ENCODE measurements at regions of chr9 and their contacts with region 1.

Region 1: DNA sequence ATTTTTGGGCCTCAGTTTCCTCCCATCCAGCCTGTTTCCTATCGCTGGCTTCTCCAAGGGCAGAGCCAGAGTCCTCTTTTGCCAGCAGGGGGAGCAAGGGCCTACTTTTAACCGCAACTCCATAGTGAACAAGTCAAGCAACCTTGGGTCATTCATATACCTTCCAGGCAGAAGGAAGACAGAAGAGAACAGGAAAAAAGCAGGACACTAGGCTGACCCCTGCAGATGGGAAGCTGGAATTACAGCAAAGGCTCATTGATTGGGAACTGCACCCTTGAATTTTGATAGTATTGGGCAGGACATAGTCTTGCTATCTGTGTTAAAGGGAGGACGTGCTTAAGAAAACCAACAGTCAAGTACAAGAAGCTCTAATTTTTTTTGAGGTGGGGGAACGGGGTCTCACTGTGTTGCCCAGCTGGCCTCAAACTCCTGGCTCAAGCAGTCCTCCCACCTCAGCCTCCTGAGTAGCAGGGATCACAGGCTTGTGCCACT is 30.1 kb downstream of the QRFP start:
- DNase-seq: peak; percentile 74
- ATAC-seq: peak; percentile 67
- H3K4me3 Mint-ChIP-seq: no peak overlapping the region
- H3K27ac Mint-ChIP-seq: no peak overlapping the region
- H3K4me1 Mint-ChIP-seq: no peaks in the 10 kb centered on the region
- H3K27me3 Mint-ChIP-seq: no peaks in the 10 kb centered on the region
- CTCF ChIP-seq: peak; percentile 92

Region 2: DNA sequence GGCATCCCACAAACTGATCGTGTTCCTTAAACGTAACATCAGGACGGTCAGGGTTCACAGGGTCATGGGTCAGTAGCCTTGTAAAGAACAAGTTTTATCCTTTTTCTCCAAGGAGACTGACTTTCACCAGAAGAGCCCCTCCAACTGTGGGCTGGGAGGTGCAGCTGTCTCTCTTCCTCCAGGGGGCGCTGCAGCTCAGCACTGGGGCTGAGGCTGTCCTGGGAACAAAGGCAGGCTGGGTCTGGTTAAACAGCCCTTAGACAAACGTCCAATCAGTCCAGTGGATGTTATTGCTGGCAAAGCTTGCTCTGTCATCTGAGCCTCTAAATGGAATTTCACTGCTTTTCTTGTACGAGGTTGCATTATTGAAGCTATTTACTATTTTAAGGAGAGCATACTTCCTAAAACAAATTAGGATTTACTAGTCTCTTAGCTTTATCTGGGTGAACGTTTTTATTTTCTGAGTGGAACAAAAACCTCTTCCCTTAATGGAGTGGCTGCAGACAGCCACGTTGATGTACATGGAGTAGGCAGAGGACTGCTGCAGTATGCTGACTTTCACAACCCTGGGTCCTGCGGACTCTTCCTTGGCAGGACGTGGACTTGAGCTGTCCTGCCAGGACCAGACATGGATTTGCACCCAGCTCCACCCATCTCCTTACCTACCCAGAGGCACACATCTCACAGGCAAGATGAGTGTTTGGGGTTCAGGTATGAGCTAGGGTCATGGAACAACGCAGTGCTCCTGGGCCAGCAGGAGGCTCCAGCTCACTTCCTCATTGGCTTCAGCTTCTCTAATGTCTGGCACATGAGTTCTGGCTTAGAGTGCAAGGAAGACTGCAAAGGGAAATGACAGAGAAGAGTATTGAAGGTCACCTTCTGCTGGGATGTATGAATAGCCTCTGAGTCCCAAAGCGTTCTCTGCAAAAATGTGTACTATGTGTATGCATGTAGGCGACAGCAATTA is 165.2 kb before region 1 on chr9:
- CTCF ChIA-PET with region 1: interaction called, 74 read pairs
- POLR2A ChIA-PET with region 1: interaction called, 3 read pairs
- intact Hi-C with region 1: loop called (anchors 10 kb)
- DNase-seq: peak; percentile 83
- ATAC-seq: peak; percentile 94
- H3K4me3 Mint-ChIP-seq: no peak overlapping the region
- H3K27ac Mint-ChIP-seq: no peak overlapping the region
- H3K4me1 Mint-ChIP-seq: peaks cover 31% of the 10 kb centered on the region
- H3K27me3 Mint-ChIP-seq: no peaks in the 10 kb centered on the region
- CTCF ChIP-seq: peak; percentile 95

Region 3: DNA sequence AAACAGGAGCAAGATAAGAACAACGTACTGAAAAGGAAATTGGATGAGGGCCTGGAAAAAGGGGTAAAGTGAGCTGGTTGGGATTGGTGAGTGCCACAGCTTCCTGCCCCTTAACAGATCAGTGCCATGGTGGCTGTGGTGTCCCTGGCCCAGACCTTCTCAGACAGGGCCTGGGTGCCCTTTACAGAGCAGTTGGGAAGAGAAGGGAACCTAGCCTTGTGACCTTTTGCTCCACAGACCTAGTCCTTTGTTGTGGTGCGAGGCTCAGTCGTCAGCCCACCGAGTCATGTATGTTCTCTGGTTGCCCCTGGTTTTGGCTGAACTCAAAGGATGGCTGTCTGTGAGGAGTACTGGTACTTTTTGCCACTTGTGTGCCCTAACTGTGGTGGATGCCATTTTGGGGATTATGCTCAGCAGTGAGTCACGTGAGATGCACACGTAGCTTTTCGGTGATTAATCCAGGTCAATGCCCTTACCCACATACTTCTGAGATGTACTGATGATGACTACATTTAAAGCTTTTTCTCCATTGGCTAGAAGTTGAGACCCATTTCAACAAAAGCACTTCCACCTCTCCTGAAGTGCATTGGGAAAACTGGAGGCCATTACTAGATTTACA is 124.6 kb before region 1 on chr9:
- CTCF ChIA-PET with region 1: no interaction called
- POLR2A ChIA-PET with region 1: no interaction called
- intact Hi-C with region 1: no loop called
- DNase-seq: peak; percentile 57
- ATAC-seq: peak; percentile 90
- H3K4me3 Mint-ChIP-seq: no peak overlapping the region
- H3K27ac Mint-ChIP-seq: no peak overlapping the region
- H3K4me1 Mint-ChIP-seq: peaks cover 19% of the 10 kb centered on the region
- H3K27me3 Mint-ChIP-seq: no peaks in the 10 kb centered on the region
- CTCF ChIP-seq: no peak

Region 4: DNA sequence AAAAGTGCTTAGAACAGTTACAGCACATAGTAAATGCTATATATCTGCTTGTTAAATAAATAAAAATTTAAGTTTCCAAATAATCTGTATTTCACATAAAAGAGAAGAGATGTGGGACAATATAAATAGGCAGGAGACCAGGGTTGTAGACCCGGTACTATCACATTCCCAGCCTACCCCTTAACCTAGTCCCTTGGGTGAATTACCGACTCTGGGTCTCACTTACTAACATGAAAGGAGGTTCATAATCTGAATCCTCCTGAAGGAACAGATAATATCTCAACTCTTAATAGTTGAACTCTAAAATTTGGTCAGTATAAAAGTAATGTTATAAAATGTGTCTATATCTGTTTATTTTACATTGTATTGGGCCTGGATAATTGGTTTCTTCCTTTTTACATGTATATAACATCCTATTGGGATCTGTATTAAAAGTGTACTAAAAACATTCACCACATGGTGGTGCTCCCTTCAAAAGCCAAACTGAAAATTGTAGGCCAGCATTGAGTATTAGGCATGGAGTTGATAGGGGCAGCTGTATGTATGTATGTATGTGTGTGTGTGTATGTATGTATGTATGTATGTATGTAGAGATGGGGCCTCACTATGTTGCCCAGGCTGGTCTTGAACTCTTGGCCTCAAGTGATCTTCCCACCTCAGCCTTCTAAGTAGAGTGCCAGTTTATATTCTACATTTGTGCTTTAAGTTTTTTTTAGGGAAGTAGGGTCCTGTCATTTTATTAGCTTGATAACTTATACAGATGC is 95.7 kb before region 1 on chr9:
- CTCF ChIA-PET with region 1: interaction called, 26 read pairs
- POLR2A ChIA-PET with region 1: no interaction called
- intact Hi-C with region 1: loop called (anchors 5 kb)
- DNase-seq: peak; percentile 11
- ATAC-seq: peak; percentile 88
- H3K4me3 Mint-ChIP-seq: no peak overlapping the region
- H3K27ac Mint-ChIP-seq: no peak overlapping the region
- H3K4me1 Mint-ChIP-seq: peaks cover 36% of the 10 kb centered on the region
- H3K27me3 Mint-ChIP-seq: no peaks in the 10 kb centered on the region
- CTCF ChIP-seq: peak; percentile 76

Region 5: DNA sequence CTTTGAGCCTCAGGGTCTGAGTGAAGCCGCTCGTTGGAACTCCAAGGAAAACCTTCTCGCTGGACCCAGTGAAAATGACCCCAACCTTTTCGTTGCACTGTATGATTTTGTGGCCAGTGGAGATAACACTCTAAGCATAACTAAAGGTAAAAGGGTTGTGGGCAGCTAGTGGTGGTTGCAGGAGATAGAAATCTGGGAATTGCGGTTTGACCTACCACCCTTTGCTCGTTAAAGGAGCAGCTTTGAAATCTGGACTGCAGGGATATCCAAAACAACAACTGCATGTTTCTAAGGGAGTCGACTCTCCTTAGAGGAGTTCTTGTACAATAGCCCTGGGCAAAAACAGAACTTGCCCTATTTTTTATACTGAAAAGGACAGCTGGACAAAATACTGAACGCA is 12.4 kb before region 1 on chr9:
- CTCF ChIA-PET with region 1: interaction called, 10 read pairs
- POLR2A ChIA-PET with region 1: no interaction called
- intact Hi-C with region 1: no loop called
- DNase-seq: no peak
- ATAC-seq: no peak
- H3K4me3 Mint-ChIP-seq: no peak overlapping the region
- H3K27ac Mint-ChIP-seq: no peak overlapping the region
- H3K4me1 Mint-ChIP-seq: peaks cover 4% of the 10 kb centered on the region
- H3K27me3 Mint-ChIP-seq: no peaks in the 10 kb centered on the region
- CTCF ChIP-seq: no peak

Region 6: DNA sequence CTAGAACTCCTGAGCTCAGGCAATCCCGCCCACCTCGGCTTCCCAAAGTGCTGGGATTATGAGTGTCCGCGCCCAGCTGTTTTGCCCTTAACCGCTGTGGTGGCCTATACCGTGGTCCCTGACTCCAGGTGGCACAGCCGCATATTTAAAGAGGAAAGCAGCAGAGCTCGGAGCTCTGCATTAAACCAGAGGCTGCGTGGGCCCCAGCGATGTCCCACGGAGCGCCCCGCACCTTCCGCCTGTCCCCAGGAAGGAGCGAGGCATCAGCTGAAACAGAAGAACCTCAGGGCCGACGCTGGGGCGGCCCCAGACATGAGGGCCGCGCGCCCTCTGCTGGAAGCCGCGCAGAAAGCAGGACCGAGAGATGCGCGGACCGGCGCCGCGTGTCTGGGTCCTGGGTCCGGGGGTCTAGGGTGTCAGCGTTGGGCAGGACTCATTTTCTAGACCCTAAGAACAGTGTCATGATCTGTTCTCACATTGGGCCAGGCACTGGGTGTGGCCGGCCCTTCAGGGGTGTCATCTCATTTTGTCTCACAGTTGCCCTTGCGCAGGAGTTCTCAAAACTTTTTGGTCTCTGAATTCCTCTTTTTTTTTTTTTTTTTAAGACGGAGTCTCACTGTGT is 180.2 kb after region 1 on chr9:
- CTCF ChIA-PET with region 1: interaction called, 42 read pairs
- POLR2A ChIA-PET with region 1: no interaction called
- intact Hi-C with region 1: loop called (anchors 5 kb)
- DNase-seq: peak; percentile 80
- ATAC-seq: peak; percentile 94
- H3K4me3 Mint-ChIP-seq: no peak overlapping the region
- H3K27ac Mint-ChIP-seq: no peak overlapping the region
- H3K4me1 Mint-ChIP-seq: no peaks in the 10 kb centered on the region
- H3K27me3 Mint-ChIP-seq: no peaks in the 10 kb centered on the region
- CTCF ChIP-seq: peak; percentile 98

Measured in activated CD8-positive, alpha-beta T cell treated with anti-CD3 and anti-CD28 coated beads for 36 hours (primary cell).